Right cardiac atrium (tissue), 5 donors: ENCODE measurements at regions of chr1 and their contacts with region 1.

Region 1: GRCh38 chr1:177413982-177414596 is 243.3 kb downstream of the BRINP2 start:
- DNase-seq: no peak
- ATAC-seq: no peak
- H3K4me3 ChIP-seq: no peak overlapping the region
- H3K27ac ChIP-seq: no peak overlapping the region
- H3K4me1 ChIP-seq: no peaks in the 10 kb centered on the region
- H3K27me3 ChIP-seq: no peaks in the 10 kb centered on the region

Region 2: DNA sequence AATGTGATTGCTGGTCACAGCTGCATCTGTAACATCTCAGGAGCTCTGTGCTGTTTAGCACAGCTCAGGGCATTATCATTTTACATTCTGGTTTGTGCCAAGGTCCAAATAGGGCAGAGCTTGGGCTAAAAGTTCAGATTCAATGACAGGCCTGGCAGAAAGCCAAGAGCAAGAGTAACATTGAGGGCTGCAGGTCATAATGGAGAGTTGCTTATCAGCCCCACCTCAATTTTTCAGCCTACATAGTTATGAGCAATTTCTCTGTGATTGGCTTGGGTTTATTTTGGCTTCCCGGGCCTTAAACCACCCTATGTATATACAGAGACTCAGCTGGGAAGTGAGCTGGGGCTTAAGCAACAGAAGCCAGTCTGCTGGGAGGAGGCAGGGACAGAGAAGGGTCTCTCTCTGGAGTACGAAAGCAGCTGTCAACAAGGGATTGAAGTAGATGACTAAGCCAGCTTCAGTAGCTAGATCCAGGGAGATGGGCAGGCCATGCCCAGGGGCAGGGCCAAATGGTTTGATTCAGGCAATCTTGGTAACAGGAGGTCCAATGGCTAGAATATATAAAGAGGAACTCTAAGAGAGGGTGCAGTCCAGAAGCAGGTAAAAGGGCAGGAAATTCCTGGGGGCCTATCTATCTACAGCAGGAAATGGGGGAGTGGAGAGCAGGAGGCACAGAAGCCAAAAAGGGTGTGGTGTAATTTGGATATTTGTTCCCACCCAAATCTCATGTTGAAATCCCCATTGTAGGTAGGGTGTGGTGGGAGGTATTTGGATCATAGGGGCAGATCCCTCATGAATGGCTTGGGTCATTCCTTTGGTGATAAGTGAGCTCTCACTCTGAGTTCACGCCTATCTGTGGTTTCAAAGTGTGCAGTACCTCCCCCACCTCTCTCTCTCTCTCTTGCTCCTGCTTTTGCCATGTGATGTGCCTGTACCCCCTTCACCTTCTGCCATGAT is 194.3 kb before region 1 on chr1:
- intact Hi-C with region 1: no loop called
- DNase-seq: no peak
- ATAC-seq: no peak
- H3K4me3 ChIP-seq: no peak overlapping the region
- H3K27ac ChIP-seq: no peak overlapping the region
- H3K4me1 ChIP-seq: peaks cover 5% of the 10 kb centered on the region
- H3K27me3 ChIP-seq: no peaks in the 10 kb centered on the region

Region 3: GRCh38 chr1:177392336-177392735 is 21.8 kb before region 1 on chr1:
- intact Hi-C with region 1: loop called in 1 of 4 experiments (anchors 2 kb)
- DNase-seq: no peak
- ATAC-seq: no peak
- H3K4me3 ChIP-seq: no peak overlapping the region
- H3K27ac ChIP-seq: no peak overlapping the region
- H3K4me1 ChIP-seq: no peaks in the 10 kb centered on the region
- H3K27me3 ChIP-seq: no peaks in the 10 kb centered on the region